Caco-2 (cell line): ENCODE measurements at regions of chr4 and their contacts with region 1.

Region 1: GRCh38 chr4:86895692-86896488 is 3.7 kb upstream of the C4orf36 start:
- DNase-seq: peak in 1 of 2 experiments; percentile 61
- H3K4me3 ChIP-seq: no peak overlapping the region
- H3K4me3 Mint-ChIP-seq: no peak overlapping the region
- H3K27ac Mint-ChIP-seq: no peak overlapping the region
- H3K4me1 ChIP-seq: no peaks in the 10 kb centered on the region
- H3K4me1 Mint-ChIP-seq: peaks cover 6% of the 10 kb centered on the region
- H3K27me3 ChIP-seq: no peaks in the 10 kb centered on the region
- H3K27me3 Mint-ChIP-seq: no peaks in the 10 kb centered on the region
- CTCF ChIP-seq: peak; percentile 52 to 59

Region 2: DNA sequence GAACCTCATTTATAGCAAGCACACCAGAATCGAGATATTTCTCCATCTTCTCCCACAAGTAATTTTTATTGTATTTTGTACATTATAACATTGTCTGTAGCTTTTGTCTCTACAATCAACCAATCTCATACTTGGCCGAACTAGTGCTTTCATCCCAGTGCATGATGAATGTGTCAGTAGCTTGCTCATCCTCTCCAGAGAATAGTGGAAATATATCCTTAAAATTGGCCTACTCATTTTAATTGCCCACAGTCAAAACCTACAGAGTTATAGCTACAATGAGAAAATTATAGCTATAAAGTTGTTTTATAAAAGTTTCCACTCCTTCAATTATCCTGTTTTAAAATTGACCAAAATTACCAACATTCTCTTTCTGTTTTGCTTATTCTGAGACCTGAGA is 639.8 kb before region 1 on chr4:
- CTCF ChIA-PET with region 1: no interaction called
- POLR2A ChIA-PET with region 1: no interaction called
- intact Hi-C with region 1: loop called (anchors 5 kb)
- DNase-seq: no peak
- H3K4me3 ChIP-seq: no peak overlapping the region
- H3K4me3 Mint-ChIP-seq: no peak overlapping the region
- H3K27ac Mint-ChIP-seq: no peak overlapping the region
- H3K4me1 ChIP-seq: no peaks in the 10 kb centered on the region
- H3K4me1 Mint-ChIP-seq: no peaks in the 10 kb centered on the region
- H3K27me3 ChIP-seq: no peaks in the 10 kb centered on the region
- H3K27me3 Mint-ChIP-seq: no peaks in the 10 kb centered on the region
- CTCF ChIP-seq: no peak

Region 3: DNA sequence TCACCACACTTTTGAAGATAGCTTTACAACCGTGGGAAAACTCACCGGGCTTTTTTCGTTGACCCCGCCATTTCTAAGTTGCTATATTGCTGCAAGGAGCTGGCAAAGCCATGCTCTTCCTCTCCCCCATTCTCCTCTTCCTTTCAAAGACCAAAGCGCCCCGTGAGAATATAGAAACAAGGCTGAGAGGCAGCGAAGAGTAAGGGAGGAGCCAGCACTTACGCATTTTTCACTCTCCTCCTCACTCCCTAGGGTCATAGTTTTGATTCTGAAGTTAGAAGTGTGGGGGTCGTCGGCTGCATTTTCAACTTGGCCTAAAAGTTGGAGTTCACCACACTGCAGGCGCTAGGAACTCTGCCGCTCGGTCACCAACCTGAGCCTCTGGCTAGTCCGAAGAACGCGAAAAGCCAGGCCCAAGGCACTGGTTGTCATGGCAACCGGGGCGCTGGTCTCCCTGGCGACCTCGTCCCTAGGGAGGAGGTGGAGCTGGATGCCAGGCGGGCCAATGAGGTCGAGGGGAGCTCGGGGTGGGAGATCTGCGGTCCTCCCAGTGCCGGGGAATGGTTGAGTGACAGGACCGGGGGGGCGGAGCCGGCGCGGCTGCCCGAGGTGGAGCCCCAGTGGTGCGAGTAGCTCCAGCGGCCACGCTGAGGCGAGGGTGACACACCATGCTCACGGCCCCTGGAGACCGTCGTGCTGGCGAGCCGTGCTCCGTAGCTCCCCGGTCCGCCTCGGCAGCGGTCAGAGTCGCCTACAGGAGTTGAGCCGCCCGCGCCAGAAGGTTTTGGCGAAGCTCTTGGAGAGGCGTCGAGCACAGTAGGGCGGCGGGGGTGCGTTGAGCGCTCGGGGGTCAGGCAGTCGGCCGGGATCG is 302.0 kb before region 1 on chr4 and contains the start of gene PTPN13:
- CTCF ChIA-PET with region 1: no interaction called
- POLR2A ChIA-PET with region 1: no interaction called
- intact Hi-C with region 1: loop called (anchors 2 kb)
- DNase-seq: peak; percentile 96
- H3K4me3 ChIP-seq: peak within 1 kb of the TSS; percentile 51
- H3K4me3 Mint-ChIP-seq: peak within 1 kb of the TSS; percentile 78
- H3K27ac Mint-ChIP-seq: peak within 1 kb of the TSS; percentile 69
- H3K4me1 ChIP-seq: no peaks in the 10 kb centered on the region
- H3K4me1 Mint-ChIP-seq: peaks cover 7% of the 10 kb centered on the region
- H3K27me3 ChIP-seq: no peaks in the 10 kb centered on the region
- H3K27me3 Mint-ChIP-seq: peaks cover 3% of the 10 kb centered on the region
- CTCF ChIP-seq: no peak
- total RNA-seq, gene PTPN13: 12.1 and 14.8 TPM in 2 replicates

Region 4: DNA sequence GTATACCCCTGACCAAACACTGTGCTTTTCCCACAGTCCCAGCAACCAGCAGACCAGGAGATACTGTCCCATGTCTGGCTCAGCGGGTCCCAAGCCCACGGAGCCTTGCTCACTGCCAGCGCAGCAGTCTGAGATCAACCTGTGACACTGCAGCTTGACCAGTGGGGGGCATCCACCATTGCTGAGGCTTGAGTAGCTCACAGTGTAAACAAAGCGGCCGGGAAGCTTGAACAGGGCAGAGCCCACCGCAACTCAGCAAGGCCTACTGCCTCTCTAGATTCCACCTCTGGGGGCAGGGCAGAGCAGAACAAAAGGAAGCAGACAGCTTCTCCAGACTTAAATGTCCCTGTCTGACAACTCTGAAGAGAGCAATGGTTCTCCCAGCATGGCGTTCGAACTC is 104.8 kb before region 1 on chr4:
- CTCF ChIA-PET with region 1: no interaction called
- POLR2A ChIA-PET with region 1: no interaction called
- intact Hi-C with region 1: loop called (anchors 5 kb)
- DNase-seq: peak; percentile 38 to 43
- H3K4me3 ChIP-seq: no peak overlapping the region
- H3K4me3 Mint-ChIP-seq: no peak overlapping the region
- H3K27ac Mint-ChIP-seq: no peak overlapping the region
- H3K4me1 ChIP-seq: no peaks in the 10 kb centered on the region
- H3K4me1 Mint-ChIP-seq: no peaks in the 10 kb centered on the region
- H3K27me3 ChIP-seq: no peaks in the 10 kb centered on the region
- H3K27me3 Mint-ChIP-seq: no peaks in the 10 kb centered on the region
- CTCF ChIP-seq: no peak

Region 5: GRCh38 chr4:87093443-87094123 is 197.7 kb after region 1 on chr4:
- CTCF ChIA-PET with region 1: no interaction called
- POLR2A ChIA-PET with region 1: no interaction called
- intact Hi-C with region 1: loop called (anchors 1 kb)
- DNase-seq: peak; percentile 40 to 55
- H3K4me3 ChIP-seq: no peak overlapping the region
- H3K4me3 Mint-ChIP-seq: no peak overlapping the region
- H3K27ac Mint-ChIP-seq: peak overlapping the region; percentile 67
- H3K4me1 ChIP-seq: peaks cover 19% of the 10 kb centered on the region
- H3K4me1 Mint-ChIP-seq: peaks cover 31% of the 10 kb centered on the region
- H3K27me3 ChIP-seq: no peaks in the 10 kb centered on the region
- H3K27me3 Mint-ChIP-seq: no peaks in the 10 kb centered on the region
- CTCF ChIP-seq: peak; percentile 31 to 56

Region 6: GRCh38 chr4:87442889-87443288 is 547.0 kb after region 1 on chr4:
- CTCF ChIA-PET with region 1: no interaction called
- POLR2A ChIA-PET with region 1: no interaction called
- intact Hi-C with region 1: loop called (anchors 2 kb)
- DNase-seq: no peak
- H3K4me3 ChIP-seq: no peak overlapping the region
- H3K4me3 Mint-ChIP-seq: no peak overlapping the region
- H3K27ac Mint-ChIP-seq: no peak overlapping the region
- H3K4me1 ChIP-seq: no peaks in the 10 kb centered on the region
- H3K4me1 Mint-ChIP-seq: peaks cover 14% of the 10 kb centered on the region
- H3K27me3 ChIP-seq: no peaks in the 10 kb centered on the region
- H3K27me3 Mint-ChIP-seq: no peaks in the 10 kb centered on the region
- CTCF ChIP-seq: no peak